Cardiac septum (tissue), 1 donor: ENCODE measurements at regions of chr10 and their contacts with region 1.

Region 1: GRCh38 chr10:33155720-33156638 is 178.5 kb downstream of the NRP1 start:
- DNase-seq: no peak

Region 2: GRCh38 chr10:32795598-32796183 is 360.3 kb before region 1 on chr10:
- intact Hi-C with region 1: loop called (anchors 10 kb)
- DNase-seq: no peak

Region 3: DNA sequence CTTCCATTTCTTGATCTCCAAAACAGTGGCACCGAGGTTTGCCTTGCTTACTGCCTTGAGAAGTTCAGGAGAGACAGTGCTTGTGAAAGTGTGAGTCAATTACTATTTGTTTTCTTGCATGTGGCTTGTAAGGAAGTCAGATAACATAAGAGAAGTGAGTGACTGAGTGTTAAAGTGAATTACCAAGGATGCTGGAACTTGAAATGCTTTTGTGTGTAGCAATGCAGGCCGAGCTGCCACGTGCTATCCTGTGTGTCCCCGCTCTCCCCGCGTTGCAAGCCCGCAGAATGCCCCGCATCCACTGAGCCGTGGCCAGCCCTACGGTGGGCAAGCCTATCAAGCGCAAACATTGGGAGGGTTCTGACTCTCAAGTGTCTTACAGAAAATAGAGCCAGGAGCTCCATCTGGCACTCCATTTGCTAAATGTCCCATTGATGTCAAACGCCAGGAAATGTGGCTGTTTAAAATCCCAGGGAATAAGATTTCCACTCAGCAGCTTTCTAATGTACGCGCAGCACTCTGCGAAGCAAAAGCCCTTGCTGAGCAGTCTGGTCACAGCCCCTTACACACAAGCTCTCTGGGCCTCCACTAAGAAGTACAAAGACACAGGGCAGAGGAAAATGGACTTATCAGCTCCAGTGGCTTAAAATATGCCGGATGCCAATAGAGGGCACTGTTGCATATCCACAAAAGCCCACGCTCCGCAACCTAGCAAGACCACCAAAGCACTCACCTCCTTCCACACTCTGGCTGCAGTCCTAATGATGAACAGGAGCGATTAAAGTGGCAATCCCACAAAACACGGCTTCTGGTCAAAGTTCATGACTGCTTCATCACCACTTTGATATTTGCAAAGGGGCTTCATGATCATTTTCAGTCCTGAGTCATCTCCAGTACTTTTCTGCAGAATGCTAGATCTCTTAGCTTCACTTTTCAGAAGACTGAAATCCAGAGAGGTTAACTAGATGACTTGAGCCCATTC is 40.0 kb before region 1 on chr10:
- intact Hi-C with region 1: loop called (anchors 5 kb)
- DNase-seq: no peak